ENCODE measurements at regions of chr14 and their contacts with region 1.

Region 1: DNA sequence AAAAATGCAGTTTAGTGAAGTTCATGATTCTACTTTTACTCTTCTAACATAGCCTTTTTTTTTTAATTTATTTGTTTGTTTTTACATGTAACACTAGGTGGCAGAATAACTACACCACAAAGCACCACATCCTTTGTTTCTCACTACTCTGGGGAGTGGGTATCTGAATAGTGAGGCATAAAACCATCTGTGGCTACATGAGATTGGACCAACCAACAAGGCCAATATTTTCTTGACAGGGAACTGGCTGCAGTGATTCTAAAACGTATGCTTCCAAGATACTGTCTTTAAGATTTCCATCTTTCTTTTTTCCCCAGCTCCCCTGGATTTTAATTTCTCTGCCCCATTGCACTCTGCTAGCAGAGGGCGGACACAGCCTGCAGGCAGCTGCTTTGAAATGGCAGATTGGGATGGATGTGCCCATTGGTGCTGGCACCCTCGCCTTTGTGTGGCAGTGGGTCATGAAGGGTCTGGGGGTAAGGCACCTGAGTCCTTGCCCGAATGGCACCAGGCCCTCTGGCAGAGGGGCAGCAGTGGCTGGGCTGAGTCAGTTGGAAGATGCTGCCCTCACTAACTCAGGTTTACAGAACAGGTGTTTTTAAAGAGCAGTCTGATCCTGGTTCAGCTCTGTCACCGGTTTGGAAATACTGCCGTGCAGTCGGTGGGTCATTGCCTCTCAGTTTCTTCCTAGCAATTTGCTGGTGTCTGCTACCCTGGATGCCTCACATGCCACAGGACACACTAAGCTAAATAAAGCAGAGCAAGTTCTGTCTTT is 429.1 kb downstream of the RAD51B start:
- DNase-seq: peak; percentile 67 to 94 (median 74)
- H3K4me3 ChIP-seq: no peak overlapping the region
- H3K27ac ChIP-seq: peak overlapping the region; percentile 58 to 84
- H3K4me1 ChIP-seq: peaks cover 34 to 39% (median 36%) of the 10 kb centered on the region in 3 donors
- H3K27me3 ChIP-seq: no peaks in the 10 kb centered on the region
- CTCF ChIP-seq: peak; percentile 46

Region 2: GRCh38 chr14:68816262-68816942 is 567.7 kb after region 1 on chr14:
- intact Hi-C with region 1: loop called (anchors 10 kb)
- DNase-seq: peak; percentile 93 to 97 (median 95)
- H3K4me3 ChIP-seq: peak overlapping the region in 2 of 3 donors; percentile 13 to 32
- H3K27ac ChIP-seq: peak overlapping the region; percentile 97 to 99
- H3K4me1 ChIP-seq: peaks cover 16 to 40% (median 36%) of the 10 kb centered on the region in 3 donors
- H3K27me3 ChIP-seq: no peaks in the 10 kb centered on the region
- CTCF ChIP-seq: peak; percentile 97

Measured in kidney (tissue), 22 donors.